ENCODE measurements at regions of chr3 and their contacts with region 1.

Region 1: GRCh38 chr3:111668912-111669488 is 73.9 kb upstream of the ZBED2 start:
- DNase-seq: peak; percentile 48
- H3K4me3 ChIP-seq: no peak overlapping the region
- H3K27ac ChIP-seq: no peak overlapping the region
- H3K4me1 ChIP-seq: peaks cover 49% of the 10 kb centered on the region
- H3K27me3 ChIP-seq: no peaks in the 10 kb centered on the region
- CTCF ChIP-seq: peak; percentile 76 to 85

Region 2: GRCh38 chr3:111616417-111617105 is 52.4 kb before region 1 on chr3:
- CTCF ChIA-PET with region 1: no interaction called
- dilution Hi-C with region 1: loop called (anchors 5 kb)
- in situ Hi-C with region 1: no loop called
- intact Hi-C with region 1: no loop called
- DNase-seq: peak; percentile 65
- H3K4me3 ChIP-seq: no peak overlapping the region
- H3K27ac ChIP-seq: no peak overlapping the region
- H3K4me1 ChIP-seq: peaks cover 20% of the 10 kb centered on the region
- H3K27me3 ChIP-seq: no peaks in the 10 kb centered on the region
- CTCF ChIP-seq: peak; percentile 51 to 66

Region 3: GRCh38 chr3:112973325-112974177 is 1304.6 kb after region 1 on chr3:
- CTCF ChIA-PET with region 1: no interaction called
- dilution Hi-C with region 1: no loop called
- in situ Hi-C with region 1: no loop called
- intact Hi-C with region 1: no loop called
- DNase-seq: no peak
- H3K4me3 ChIP-seq: no peak overlapping the region
- H3K27ac ChIP-seq: no peak overlapping the region
- H3K4me1 ChIP-seq: no peaks in the 10 kb centered on the region
- H3K27me3 ChIP-seq: peaks cover 3% of the 10 kb centered on the region
- CTCF ChIP-seq: no peak

Measured in mammary epithelial cell (primary cell).